ENCODE measurements at regions of chr11 and their contacts with region 1.

Region 1: GRCh38 chr11:109956124-109956793 is 136.9 kb upstream of the ZC3H12C start:
- DNase-seq: no peak
- ATAC-seq: no peak
- H3K4me3 ChIP-seq: no peak overlapping the region
- H3K4me3 Mint-ChIP-seq: peak overlapping the region in 1 of 10 donors; percentile 52
- H3K27ac ChIP-seq: no peak overlapping the region
- H3K27ac Mint-ChIP-seq: peak overlapping the region in 1 of 9 donors; percentile 70
- H3K4me1 ChIP-seq: no peaks in the 10 kb centered on the region
- H3K4me1 Mint-ChIP-seq: peaks cover 0 to 17% (median 0%) of the 10 kb centered on the region in 7 donors
- H3K27me3 ChIP-seq: no peaks in the 10 kb centered on the region
- H3K27me3 Mint-ChIP-seq: peaks cover 7 to 32% (median 13%) of the 10 kb centered on the region in 5 donors

Region 2: GRCh38 chr11:109971184-109971523 is 14.9 kb after region 1 on chr11:
- CTCF ChIA-PET with region 1: no interaction called
- POLR2A ChIA-PET with region 1: no interaction called
- intact Hi-C with region 1: loop called in 1 of 2 experiments (anchors 2 kb)
- DNase-seq: peak in 1 of 9 donors; percentile 12
- ATAC-seq: peak; percentile 12
- H3K4me3 ChIP-seq: no peak overlapping the region
- H3K4me3 Mint-ChIP-seq: peak overlapping the region in 2 of 10 donors; percentile 36 to 67
- H3K27ac ChIP-seq: no peak overlapping the region
- H3K27ac Mint-ChIP-seq: peak overlapping the region in 1 of 9 donors; percentile 68
- H3K4me1 ChIP-seq: no peaks in the 10 kb centered on the region
- H3K4me1 Mint-ChIP-seq: peaks cover 0 to 28% (median 6%) of the 10 kb centered on the region in 7 donors
- H3K27me3 ChIP-seq: no peaks in the 10 kb centered on the region
- H3K27me3 Mint-ChIP-seq: peaks cover 4 to 23% (median 10%) of the 10 kb centered on the region in 5 donors

Region 3: GRCh38 chr11:109984634-109985289 is 28.5 kb after region 1 on chr11:
- CTCF ChIA-PET with region 1: no interaction called
- POLR2A ChIA-PET with region 1: no interaction called
- intact Hi-C with region 1: loop called in 1 of 2 experiments (anchors 1 kb)
- DNase-seq: no peak
- ATAC-seq: peak; percentile 68
- H3K4me3 ChIP-seq: no peak overlapping the region
- H3K4me3 Mint-ChIP-seq: peak overlapping the region in 2 of 10 donors; percentile 7 to 40
- H3K27ac ChIP-seq: no peak overlapping the region
- H3K27ac Mint-ChIP-seq: no peak overlapping the region
- H3K4me1 ChIP-seq: no peaks in the 10 kb centered on the region
- H3K4me1 Mint-ChIP-seq: peaks cover 0 to 16% (median 4%) of the 10 kb centered on the region in 7 donors
- H3K27me3 ChIP-seq: no peaks in the 10 kb centered on the region
- H3K27me3 Mint-ChIP-seq: peaks cover 6 to 19% (median 12%) of the 10 kb centered on the region in 5 donors